Activated CD8-positive, alpha-beta T cell treated with anti-CD3 and anti-CD28 coated beads, Interleukin-2, amount 10 ng/mL, durations not matched to agents 7 days and 5 days (primary cell): ENCODE measurements at regions of chr4 and their contacts with region 1.

Region 1: DNA sequence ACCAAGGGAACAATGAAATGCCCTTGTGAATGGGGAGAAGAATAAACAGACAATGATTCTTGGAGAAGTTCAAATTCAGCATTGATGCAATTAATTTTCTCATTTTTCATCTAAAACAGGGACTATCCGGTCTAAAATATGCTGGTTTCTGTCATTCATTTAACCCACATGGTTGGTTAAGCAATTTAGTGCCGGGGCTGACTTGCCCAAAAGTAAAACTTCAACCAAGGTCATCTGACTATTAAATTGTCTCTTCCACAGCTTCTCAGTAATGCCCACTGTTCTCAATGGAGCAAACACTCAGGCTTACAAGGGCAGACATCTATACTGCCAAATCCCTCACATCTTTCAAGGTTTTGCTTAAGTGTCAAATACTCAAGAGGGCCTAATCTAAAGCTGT is 51.3 kb downstream of the ANXA10 start:
- DNase-seq: no peak
- ATAC-seq: no peak
- H3K4me3 Mint-ChIP-seq: no peak overlapping the region
- H3K27ac Mint-ChIP-seq: no peak overlapping the region
- H3K4me1 Mint-ChIP-seq: no peaks in the 10 kb centered on the region
- H3K27me3 Mint-ChIP-seq: no peaks in the 10 kb centered on the region

Region 2: GRCh38 chr4:168070903-168071302 is 72.7 kb before region 1 on chr4:
- CTCF ChIA-PET with region 1: no interaction called
- POLR2A ChIA-PET with region 1: no interaction called
- DNase-seq: no peak
- ATAC-seq: no peak
- H3K4me3 Mint-ChIP-seq: no peak overlapping the region
- H3K27ac Mint-ChIP-seq: no peak overlapping the region
- H3K4me1 Mint-ChIP-seq: no peaks in the 10 kb centered on the region
- H3K27me3 Mint-ChIP-seq: no peaks in the 10 kb centered on the region

Region 3: GRCh38 chr4:168153596-168154440 is 10.2 kb after region 1 on chr4:
- CTCF ChIA-PET with region 1: interaction called, 12 read pairs
- POLR2A ChIA-PET with region 1: no interaction called
- DNase-seq: peak; percentile 71
- ATAC-seq: peak; percentile 81
- H3K4me3 Mint-ChIP-seq: no peak overlapping the region
- H3K27ac Mint-ChIP-seq: no peak overlapping the region
- H3K4me1 Mint-ChIP-seq: peaks cover 4% of the 10 kb centered on the region
- H3K27me3 Mint-ChIP-seq: peaks cover 2% of the 10 kb centered on the region